ENCODE measurements at regions of chr19 and their contacts with region 1.

Region 1: GRCh38 chr19:43595999-43596841 is at the starts of genes IRGQ and ZNF576:
- DNase-seq: peak; percentile 100
- H3K4me3 ChIP-seq: peak within 1 kb of the TSS; percentile 69 to 89 (median 74)
- H3K27ac ChIP-seq: peak within 1 kb of the TSS; percentile 96
- H3K4me1 ChIP-seq: peaks cover 24% of the 10 kb centered on the region
- H3K27me3 ChIP-seq: no peaks in the 10 kb centered on the region
- CTCF ChIP-seq: no peak
- POLR2A ChIP-seq: peak; percentile 81
- total RNA-seq, gene IRGQ: 33.2 and 34.1 TPM in 2 replicates
- total RNA-seq, gene ZNF576: 19.5 and 20.3 TPM in 2 replicates

Region 2: GRCh38 chr19:43207991-43208390 is 388.2 kb before region 1 on chr19:
- CTCF ChIA-PET with region 1: no interaction called
- POLR2A ChIA-PET with region 1: no interaction called
- dilution Hi-C with region 1: no loop called
- intact Hi-C with region 1: no loop called
- DNase-seq: no peak
- H3K4me3 ChIP-seq: no peak overlapping the region
- H3K27ac ChIP-seq: no peak overlapping the region
- H3K4me1 ChIP-seq: no peaks in the 10 kb centered on the region
- H3K27me3 ChIP-seq: no peaks in the 10 kb centered on the region
- CTCF ChIP-seq: no peak
- POLR2A ChIP-seq: no peak

Region 3: GRCh38 chr19:43511324-43511723 is 84.9 kb before region 1 on chr19:
- CTCF ChIA-PET with region 1: no interaction called
- POLR2A ChIA-PET with region 1: no interaction called
- dilution Hi-C with region 1: no loop called
- intact Hi-C with region 1: no loop called
- DNase-seq: no peak
- H3K4me3 ChIP-seq: no peak overlapping the region
- H3K27ac ChIP-seq: no peak overlapping the region
- H3K4me1 ChIP-seq: no peaks in the 10 kb centered on the region
- H3K27me3 ChIP-seq: no peaks in the 10 kb centered on the region
- CTCF ChIP-seq: no peak
- POLR2A ChIP-seq: no peak

Region 4: DNA sequence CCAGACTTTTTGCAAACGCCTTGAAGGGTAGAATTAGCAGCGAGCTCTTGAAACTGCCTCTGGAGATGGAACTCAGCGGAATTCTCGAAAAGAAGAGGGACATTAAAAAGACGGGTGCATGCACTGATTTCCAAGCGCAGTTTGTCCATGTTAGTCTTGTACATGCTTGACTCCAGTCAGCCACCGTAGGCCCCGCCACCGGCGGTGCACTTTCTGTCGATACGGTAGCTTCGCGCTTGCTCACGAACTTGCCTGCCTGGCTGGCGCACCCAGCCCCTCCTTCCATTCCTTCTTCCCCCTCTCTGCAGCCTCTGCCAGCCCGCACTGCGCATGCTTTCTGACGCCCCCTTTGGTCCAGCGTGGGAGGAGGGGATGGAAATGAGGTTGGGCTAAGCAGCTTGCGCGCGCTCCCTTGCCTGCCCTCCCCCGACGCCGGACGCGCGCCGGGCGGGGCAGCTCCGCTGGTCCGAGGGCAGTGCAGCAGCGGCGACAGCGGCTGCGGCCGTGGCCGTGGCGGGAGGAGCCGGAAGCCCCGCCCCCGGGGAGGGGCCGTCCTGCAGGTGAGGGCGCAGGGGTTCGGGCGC is 63.2 kb before region 1 on chr19 and contains the start of gene ZNF575:
- CTCF ChIA-PET with region 1: interaction called, 118 read pairs
- POLR2A ChIA-PET with region 1: interaction called, 6 read pairs
- dilution Hi-C with region 1: no loop called
- intact Hi-C with region 1: loop called (anchors 1 kb)
- DNase-seq: peak; percentile 96
- H3K4me3 ChIP-seq: peak within 1 kb of the TSS; percentile 22 to 61 (median 31)
- H3K27ac ChIP-seq: peak within 1 kb of the TSS; percentile 32
- H3K4me1 ChIP-seq: peaks cover 10% of the 10 kb centered on the region
- H3K27me3 ChIP-seq: no peaks in the 10 kb centered on the region
- CTCF ChIP-seq: no peak
- POLR2A ChIP-seq: no peak
- total RNA-seq, gene ZNF575: 1.4 and 3.0 TPM in 2 replicates

Region 5: DNA sequence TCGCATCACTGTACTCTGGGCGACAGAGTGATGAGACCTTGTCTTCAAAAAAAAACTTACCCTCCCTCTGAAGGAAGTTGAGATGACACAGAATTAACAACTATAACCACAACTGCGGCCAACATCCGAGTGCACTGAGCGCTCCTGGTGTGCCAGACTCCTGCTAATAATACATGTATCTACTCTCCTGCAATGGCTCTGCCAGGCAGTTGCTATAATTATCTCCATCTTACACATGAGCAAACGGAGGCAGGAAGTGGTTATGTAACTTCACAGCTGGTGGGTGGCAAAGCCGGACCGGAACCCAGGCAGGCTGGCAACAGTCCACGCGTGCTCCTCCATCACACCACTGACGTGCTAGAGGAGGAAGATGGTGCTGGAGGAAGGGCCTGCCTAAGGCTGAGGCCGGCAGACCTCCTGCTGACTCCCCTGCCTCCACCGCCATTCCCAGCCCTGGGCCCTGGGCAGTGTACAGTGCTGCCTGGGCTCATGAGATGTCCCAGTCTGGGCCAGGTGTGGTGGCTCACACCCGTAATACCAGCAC is 33.5 kb before region 1 on chr19:
- CTCF ChIA-PET with region 1: interaction called, 158 read pairs
- POLR2A ChIA-PET with region 1: no interaction called
- dilution Hi-C with region 1: no loop called
- intact Hi-C with region 1: no loop called
- DNase-seq: peak; percentile 53
- H3K4me3 ChIP-seq: no peak overlapping the region
- H3K27ac ChIP-seq: no peak overlapping the region
- H3K4me1 ChIP-seq: no peaks in the 10 kb centered on the region
- H3K27me3 ChIP-seq: no peaks in the 10 kb centered on the region
- CTCF ChIP-seq: no peak
- POLR2A ChIP-seq: no peak

Region 6: GRCh38 chr19:43584484-43584883 is 11.7 kb before region 1 on chr19:
- CTCF ChIA-PET with region 1: interaction called, 21 read pairs
- POLR2A ChIA-PET with region 1: no interaction called
- dilution Hi-C with region 1: no loop called
- intact Hi-C with region 1: no loop called
- DNase-seq: no peak
- H3K4me3 ChIP-seq: no peak overlapping the region
- H3K27ac ChIP-seq: no peak overlapping the region
- H3K4me1 ChIP-seq: no peaks in the 10 kb centered on the region
- H3K27me3 ChIP-seq: no peaks in the 10 kb centered on the region
- CTCF ChIP-seq: no peak
- POLR2A ChIP-seq: no peak

Region 7: DNA sequence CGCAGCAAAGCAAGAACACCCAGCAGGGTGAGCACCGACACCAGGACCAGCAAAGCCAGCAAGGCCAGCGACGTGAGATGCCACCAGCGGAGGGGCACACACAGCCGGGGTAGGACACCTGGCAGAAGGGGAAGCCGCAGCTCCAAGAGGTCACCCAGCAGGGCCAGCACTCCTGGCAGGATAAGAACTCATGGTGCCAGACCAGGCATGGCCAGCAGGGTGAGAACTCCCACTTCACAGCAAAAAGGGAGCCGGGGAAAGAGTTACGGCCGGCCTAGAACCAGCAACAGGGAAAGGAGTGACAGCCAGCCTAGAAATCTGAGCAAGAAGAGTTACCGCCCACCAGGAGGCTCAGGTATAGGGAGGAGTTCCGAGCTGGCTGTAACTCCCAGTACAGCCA is 16.2 kb after region 1 on chr19:
- CTCF ChIA-PET with region 1: no interaction called
- POLR2A ChIA-PET with region 1: no interaction called
- dilution Hi-C with region 1: no loop called
- intact Hi-C with region 1: no loop called
- DNase-seq: no peak
- H3K4me3 ChIP-seq: no peak overlapping the region
- H3K27ac ChIP-seq: no peak overlapping the region
- H3K4me1 ChIP-seq: no peaks in the 10 kb centered on the region
- H3K27me3 ChIP-seq: no peaks in the 10 kb centered on the region
- CTCF ChIP-seq: no peak
- POLR2A ChIP-seq: no peak

Region 8: DNA sequence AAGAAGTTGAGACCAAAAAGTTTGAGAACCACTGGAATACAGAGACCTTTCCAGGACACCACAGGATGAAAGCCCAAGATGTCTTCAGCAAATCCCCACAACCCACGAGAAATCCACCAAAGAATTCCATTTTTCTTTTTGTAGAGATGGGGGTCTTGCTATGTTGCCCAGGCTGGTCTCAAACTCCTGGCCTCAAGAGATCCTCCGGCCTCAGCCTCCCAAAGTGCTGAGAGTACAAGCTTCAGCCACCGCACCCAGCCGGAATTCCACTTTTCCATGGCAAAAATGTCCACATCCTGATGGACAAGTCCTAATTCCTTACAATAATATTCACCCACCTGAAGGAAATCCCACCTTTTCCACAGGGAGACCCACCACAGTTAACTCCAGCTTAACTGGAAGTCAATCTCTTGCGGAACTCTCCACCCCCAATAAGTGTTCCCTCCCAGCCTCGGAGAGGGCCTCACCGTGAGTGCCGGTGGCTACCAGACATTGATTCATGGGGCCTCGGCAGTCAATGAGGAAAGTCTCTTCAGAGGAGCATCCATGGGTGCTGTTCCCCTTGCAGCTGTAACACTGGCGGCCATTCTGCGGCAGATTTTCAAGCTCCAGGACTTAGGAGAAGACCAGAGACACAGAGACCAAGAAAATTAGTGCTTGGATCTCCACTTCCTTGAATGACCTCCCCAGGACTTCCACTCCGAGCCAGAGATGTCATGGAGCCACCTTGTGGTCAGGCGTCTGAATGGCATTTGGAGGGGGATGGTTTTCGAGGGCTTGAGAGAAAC is 55.7 kb after region 1 on chr19:
- CTCF ChIA-PET with region 1: interaction called, 6 read pairs
- POLR2A ChIA-PET with region 1: no interaction called
- dilution Hi-C with region 1: no loop called
- intact Hi-C with region 1: loop called (anchors 1 kb)
- DNase-seq: peak; percentile 77
- H3K4me3 ChIP-seq: peak overlapping the region in 1 of 3 experiments; percentile 7
- H3K27ac ChIP-seq: no peak overlapping the region
- H3K4me1 ChIP-seq: no peaks in the 10 kb centered on the region
- H3K27me3 ChIP-seq: no peaks in the 10 kb centered on the region
- CTCF ChIP-seq: peak; percentile 82 to 86
- POLR2A ChIP-seq: no peak

Region 9: DNA sequence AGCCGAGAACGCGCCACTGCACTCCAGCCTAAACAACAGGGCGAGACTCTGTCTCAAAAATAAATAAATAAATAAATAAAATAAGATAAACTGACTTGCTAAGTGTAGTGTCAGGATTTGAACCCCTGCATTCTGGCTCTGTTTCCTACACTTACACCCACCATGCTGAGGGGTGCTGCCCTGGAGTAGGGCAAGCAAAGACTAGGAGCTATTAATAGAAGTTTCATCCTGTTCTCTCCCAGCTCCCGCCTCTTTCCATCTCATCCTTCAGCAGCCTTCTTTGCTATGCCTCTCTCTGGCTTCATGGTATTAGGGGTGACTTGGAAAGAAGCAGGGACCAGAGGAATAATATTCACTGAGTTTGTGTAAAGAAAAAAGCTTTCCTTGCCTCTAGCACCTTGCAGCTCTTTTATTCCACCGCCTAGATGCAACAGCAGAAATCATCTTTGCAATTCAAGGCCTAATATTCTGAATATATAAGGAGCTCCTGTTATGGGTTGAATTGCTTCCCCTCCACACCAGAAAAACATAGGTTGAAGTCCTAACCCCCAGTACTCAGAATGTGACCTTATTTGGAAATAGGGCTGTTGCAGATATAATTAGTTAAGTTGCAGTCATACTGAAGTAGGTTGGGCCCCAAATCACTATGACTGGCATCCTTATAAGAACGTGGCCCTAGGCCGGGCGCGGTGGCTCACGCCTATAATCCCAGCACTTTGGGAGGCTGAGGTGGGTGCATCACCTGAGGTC is 82.5 kb after region 1 on chr19:
- CTCF ChIA-PET with region 1: no interaction called
- POLR2A ChIA-PET with region 1: no interaction called
- dilution Hi-C with region 1: no loop called
- intact Hi-C with region 1: no loop called
- DNase-seq: no peak
- H3K4me3 ChIP-seq: no peak overlapping the region
- H3K27ac ChIP-seq: no peak overlapping the region
- H3K4me1 ChIP-seq: no peaks in the 10 kb centered on the region
- H3K27me3 ChIP-seq: peaks cover 0 to 2% of the 10 kb centered on the region in 2 experiments
- CTCF ChIP-seq: no peak
- POLR2A ChIP-seq: no peak

Region 10: GRCh38 chr19:43784981-43785808 is 189.0 kb after region 1 on chr19:
- CTCF ChIA-PET with region 1: no interaction called
- POLR2A ChIA-PET with region 1: no interaction called
- dilution Hi-C with region 1: no loop called
- intact Hi-C with region 1: loop called (anchors 1 kb)
- DNase-seq: peak; percentile 73
- H3K4me3 ChIP-seq: no peak overlapping the region
- H3K27ac ChIP-seq: no peak overlapping the region
- H3K4me1 ChIP-seq: peaks cover 10% of the 10 kb centered on the region
- H3K27me3 ChIP-seq: no peaks in the 10 kb centered on the region
- CTCF ChIP-seq: peak; percentile 97 to 98
- POLR2A ChIP-seq: no peak

Measured in endothelial cell of umbilical vein (primary cell).